Activated naive CD4-positive, alpha-beta T cell treated with anti-CD3 and anti-CD28 coated beads for 36 hours (primary cell): ENCODE measurements at regions of chr7 and their contacts with region 1.

Region 1: DNA sequence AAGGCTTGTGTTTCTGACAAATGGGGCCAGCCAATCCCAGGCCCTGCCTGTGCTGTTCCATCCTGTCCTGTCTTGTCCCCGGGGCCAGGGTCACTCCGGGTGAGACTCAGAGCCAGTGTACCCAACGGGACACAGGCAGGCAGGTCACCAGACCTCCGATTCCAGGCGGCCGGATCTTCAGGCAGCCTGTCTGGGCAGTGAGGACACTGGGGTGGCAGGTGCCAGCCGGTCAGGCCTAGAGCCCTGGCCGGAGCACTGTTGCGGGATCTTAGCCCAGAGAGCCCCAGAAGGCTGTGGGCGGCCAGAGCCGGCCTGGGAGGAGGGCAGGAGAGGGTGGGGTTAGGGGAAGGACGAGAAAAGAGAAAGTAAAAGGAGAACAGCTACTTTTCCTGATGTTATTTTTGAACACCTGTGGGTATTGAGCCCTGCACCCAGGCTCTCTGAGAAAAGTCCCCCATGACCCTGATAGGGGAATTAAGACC is 134.3 kb upstream of the TNRC18 start:
- DNase-seq: peak; percentile 37
- H3K4me3 Mint-ChIP-seq: peak overlapping the region; percentile 60
- H3K27ac Mint-ChIP-seq: peak overlapping the region; percentile 85
- H3K4me1 Mint-ChIP-seq: peaks cover 40% of the 10 kb centered on the region
- H3K27me3 Mint-ChIP-seq: no peaks in the 10 kb centered on the region

Region 2: GRCh38 chr7:5396999-5397663 is 160.8 kb before region 1 on chr7:
- CTCF ChIA-PET with region 1: interaction called, 17 read pairs
- intact Hi-C with region 1: loop called (anchors 1 kb)
- DNase-seq: peak; percentile 92
- H3K4me3 Mint-ChIP-seq: peak overlapping the region; percentile 79
- H3K27ac Mint-ChIP-seq: peak overlapping the region; percentile 92
- H3K4me1 Mint-ChIP-seq: peaks cover 32% of the 10 kb centered on the region
- H3K27me3 Mint-ChIP-seq: no peaks in the 10 kb centered on the region

Region 3: GRCh38 chr7:5501465-5501864 is 56.5 kb before region 1 on chr7:
- CTCF ChIA-PET with region 1: interaction called, 11 read pairs
- intact Hi-C with region 1: no loop called
- DNase-seq: no peak
- H3K4me3 Mint-ChIP-seq: no peak overlapping the region
- H3K27ac Mint-ChIP-seq: no peak overlapping the region
- H3K4me1 Mint-ChIP-seq: peaks cover 12% of the 10 kb centered on the region
- H3K27me3 Mint-ChIP-seq: no peaks in the 10 kb centered on the region

Region 4: GRCh38 chr7:5532520-5533335 is 25.2 kb before region 1 on chr7:
- CTCF ChIA-PET with region 1: interaction called, 10 read pairs
- intact Hi-C with region 1: no loop called
- DNase-seq: peak; percentile 79
- H3K4me3 Mint-ChIP-seq: peak overlapping the region; percentile 91
- H3K27ac Mint-ChIP-seq: peak overlapping the region; percentile 98
- H3K4me1 Mint-ChIP-seq: peaks cover 22% of the 10 kb centered on the region
- H3K27me3 Mint-ChIP-seq: no peaks in the 10 kb centered on the region